ENCODE measurements at regions of chr7 and their contacts with region 1.

Region 1: DNA sequence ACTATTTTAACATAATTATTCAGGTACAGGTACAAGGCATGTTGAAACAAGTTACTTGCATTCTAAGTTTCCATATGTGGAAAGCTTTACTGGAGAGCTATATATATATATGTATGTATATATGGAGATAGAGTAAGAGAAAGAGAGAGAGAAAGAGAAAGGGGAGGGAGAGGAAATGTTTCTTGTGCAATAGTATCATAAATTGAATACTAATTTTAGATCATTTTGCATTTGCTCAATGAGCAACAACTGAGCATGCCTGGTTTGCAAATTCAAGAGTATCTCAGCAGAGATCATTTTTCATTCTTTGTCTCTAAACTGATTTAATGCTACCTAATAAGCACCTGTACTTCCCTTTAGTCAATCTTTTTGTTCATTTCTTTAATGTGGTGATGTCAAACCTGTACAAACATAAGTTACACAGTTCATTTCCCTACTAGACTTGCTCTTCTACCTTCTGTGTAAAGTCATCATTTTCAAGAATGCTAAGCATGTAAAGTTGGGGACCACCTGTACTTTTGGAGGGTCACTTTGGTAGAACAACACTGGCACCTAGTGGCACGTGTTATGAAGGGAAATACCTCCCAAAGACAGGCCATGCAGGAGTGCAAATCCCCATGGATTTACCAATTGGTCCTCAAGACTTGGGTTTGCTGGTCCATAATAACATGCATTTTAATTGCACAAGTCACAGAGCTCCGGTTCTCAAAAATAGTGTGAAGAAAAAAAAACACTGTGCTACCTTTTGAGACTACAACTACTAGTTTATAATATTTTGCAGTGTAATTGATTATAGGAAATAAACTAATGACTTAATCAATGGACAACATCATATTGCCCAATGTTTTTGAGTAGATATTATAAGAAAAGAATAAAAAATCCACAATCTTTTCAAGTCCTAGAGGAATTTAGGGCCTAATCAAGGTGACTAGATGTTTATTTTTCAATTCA is 431.2 kb upstream of the IGFBP3 start:
- DNase-seq: peak; percentile 71
- H3K4me3 Mint-ChIP-seq: no peak overlapping the region
- H3K27ac Mint-ChIP-seq: no peak overlapping the region
- H3K4me1 Mint-ChIP-seq: peaks cover 5% of the 10 kb centered on the region
- H3K27me3 Mint-ChIP-seq: no peaks in the 10 kb centered on the region
- CTCF ChIP-seq: peak; percentile 72

Region 2: GRCh38 chr7:45157653-45158401 is 1194.5 kb before region 1 on chr7 and contains the start of gene RAMP3:
- CTCF ChIA-PET with region 1: no interaction called
- POLR2A ChIA-PET with region 1: no interaction called
- intact Hi-C with region 1: loop called (anchors 10 kb)
- DNase-seq: no peak
- H3K4me3 Mint-ChIP-seq: no peak within 1 kb of the TSS
- H3K27ac Mint-ChIP-seq: no peak within 1 kb of the TSS
- H3K4me1 Mint-ChIP-seq: no peaks in the 10 kb centered on the region
- H3K27me3 Mint-ChIP-seq: peaks cover 14% of the 10 kb centered on the region
- CTCF ChIP-seq: no peak
- total RNA-seq, gene RAMP3: not detected in 2 replicates

Region 3: GRCh38 chr7:45890902-45891461 is 461.3 kb before region 1 on chr7:
- CTCF ChIA-PET with region 1: interaction called, 4 read pairs
- POLR2A ChIA-PET with region 1: no interaction called
- intact Hi-C with region 1: loop called (anchors 1 kb)
- DNase-seq: peak; percentile 57
- H3K4me3 Mint-ChIP-seq: no peak overlapping the region
- H3K27ac Mint-ChIP-seq: no peak overlapping the region
- H3K4me1 Mint-ChIP-seq: peaks cover 10% of the 10 kb centered on the region
- H3K27me3 Mint-ChIP-seq: peaks cover 12% of the 10 kb centered on the region
- CTCF ChIP-seq: peak; percentile 67

Region 4: GRCh38 chr7:46131916-46132795 is 220.1 kb before region 1 on chr7:
- CTCF ChIA-PET with region 1: interaction called, 3 read pairs
- POLR2A ChIA-PET with region 1: no interaction called
- intact Hi-C with region 1: loop called (anchors 1 kb)
- DNase-seq: peak; percentile 6
- H3K4me3 Mint-ChIP-seq: no peak overlapping the region
- H3K27ac Mint-ChIP-seq: no peak overlapping the region
- H3K4me1 Mint-ChIP-seq: peaks cover 12% of the 10 kb centered on the region
- H3K27me3 Mint-ChIP-seq: no peaks in the 10 kb centered on the region
- CTCF ChIP-seq: no peak

Region 5: DNA sequence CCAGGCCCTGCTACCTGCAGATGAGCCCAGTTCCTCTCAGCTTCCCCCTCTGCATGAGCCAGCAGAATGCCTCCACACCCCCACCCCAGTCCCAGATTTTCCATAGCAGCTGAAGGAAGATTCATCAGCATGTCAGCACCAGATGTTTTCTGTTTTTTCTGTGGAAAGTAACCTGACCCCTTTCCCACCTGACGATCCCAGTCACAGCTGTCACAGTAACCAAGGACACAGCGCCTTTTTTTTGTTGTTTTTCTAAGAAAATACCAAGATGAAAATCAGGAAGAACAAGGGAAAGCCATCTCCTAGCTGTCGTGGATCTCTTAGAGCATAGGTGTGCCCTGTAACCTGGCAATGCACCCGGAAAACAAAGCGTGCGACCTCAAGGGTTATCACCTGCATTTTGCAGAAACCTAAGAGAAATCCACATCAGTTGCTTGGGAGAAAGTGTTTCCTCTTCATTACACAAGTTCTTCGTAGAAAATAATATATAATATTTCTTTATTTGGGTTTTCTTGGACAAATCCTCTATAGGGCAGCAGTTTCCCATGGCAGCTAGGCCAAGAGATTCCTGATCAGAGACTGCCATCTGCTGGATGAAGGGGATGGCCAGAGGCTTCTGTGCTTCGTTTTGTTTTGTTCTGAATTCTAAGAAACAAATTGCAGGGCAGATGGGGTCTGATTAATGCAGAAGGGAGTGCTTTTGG is 827.7 kb after region 1 on chr7:
- CTCF ChIA-PET with region 1: interaction called, 5 read pairs
- POLR2A ChIA-PET with region 1: no interaction called
- intact Hi-C with region 1: loop called (anchors 1 kb)
- DNase-seq: peak; percentile 76
- H3K4me3 Mint-ChIP-seq: no peak overlapping the region
- H3K27ac Mint-ChIP-seq: no peak overlapping the region
- H3K4me1 Mint-ChIP-seq: no peaks in the 10 kb centered on the region
- H3K27me3 Mint-ChIP-seq: peaks cover 20% of the 10 kb centered on the region
- CTCF ChIP-seq: peak; percentile 85